Sigmoid colon (tissue), 7 donors: ENCODE measurements at regions of chr12 and their contacts with region 1.

Region 1: GRCh38 chr12:12562585-12563261 is at the start of gene DUSP16:
- DNase-seq: peak; percentile 94
- H3K4me3 ChIP-seq: peak within 1 kb of the TSS; percentile 88 to 96 (median 92)
- H3K27ac ChIP-seq: peak within 1 kb of the TSS; percentile 96 to 100 (median 100)
- H3K4me1 ChIP-seq: peaks cover 0 to 40% (median 25%) of the 10 kb centered on the region in 4 donors
- H3K27me3 ChIP-seq: no peaks in the 10 kb centered on the region
- CTCF ChIP-seq: no peak
- EP300 ChIP-seq: no peak
- POLR2A ChIP-seq: no peak
- total RNA-seq, gene DUSP16: 8.6 to 13.8 (median 11.2) TPM

Region 2: GRCh38 chr12:10721651-10722501 is 1840.8 kb before region 1 on chr12:
- intact Hi-C with region 1: loop called (anchors 5 kb)
- DNase-seq: peak; percentile 98
- H3K4me3 ChIP-seq: peak overlapping the region; percentile 65 to 99 (median 96)
- H3K27ac ChIP-seq: peak overlapping the region; percentile 96 to 99 (median 98)
- H3K4me1 ChIP-seq: peaks cover 0 to 55% (median 50%) of the 10 kb centered on the region in 4 donors
- H3K27me3 ChIP-seq: no peaks in the 10 kb centered on the region
- CTCF ChIP-seq: no peak
- EP300 ChIP-seq: peak; percentile 68 to 97 (median 86)
- POLR2A ChIP-seq: peak; percentile 24 to 26

Region 3: GRCh38 chr12:12356886-12357718 is 205.6 kb before region 1 on chr12 and contains the start of gene BORCS5:
- intact Hi-C with region 1: loop called (anchors 5 kb)
- DNase-seq: peak; percentile 98
- H3K4me3 ChIP-seq: peak within 1 kb of the TSS; percentile 82 to 99 (median 93)
- H3K27ac ChIP-seq: peak within 1 kb of the TSS; percentile 97 to 100 (median 98)
- H3K4me1 ChIP-seq: peaks cover 0 to 19% (median 11%) of the 10 kb centered on the region in 4 donors
- H3K27me3 ChIP-seq: no peaks in the 10 kb centered on the region
- CTCF ChIP-seq: peak in 1 of 4 experiments; percentile 8
- EP300 ChIP-seq: peak in 1 of 4 donors; percentile 62
- POLR2A ChIP-seq: peak; percentile 95 to 98
- total RNA-seq, gene BORCS5: 7.1 to 25.3 (median 14.0) TPM

Region 4: DNA sequence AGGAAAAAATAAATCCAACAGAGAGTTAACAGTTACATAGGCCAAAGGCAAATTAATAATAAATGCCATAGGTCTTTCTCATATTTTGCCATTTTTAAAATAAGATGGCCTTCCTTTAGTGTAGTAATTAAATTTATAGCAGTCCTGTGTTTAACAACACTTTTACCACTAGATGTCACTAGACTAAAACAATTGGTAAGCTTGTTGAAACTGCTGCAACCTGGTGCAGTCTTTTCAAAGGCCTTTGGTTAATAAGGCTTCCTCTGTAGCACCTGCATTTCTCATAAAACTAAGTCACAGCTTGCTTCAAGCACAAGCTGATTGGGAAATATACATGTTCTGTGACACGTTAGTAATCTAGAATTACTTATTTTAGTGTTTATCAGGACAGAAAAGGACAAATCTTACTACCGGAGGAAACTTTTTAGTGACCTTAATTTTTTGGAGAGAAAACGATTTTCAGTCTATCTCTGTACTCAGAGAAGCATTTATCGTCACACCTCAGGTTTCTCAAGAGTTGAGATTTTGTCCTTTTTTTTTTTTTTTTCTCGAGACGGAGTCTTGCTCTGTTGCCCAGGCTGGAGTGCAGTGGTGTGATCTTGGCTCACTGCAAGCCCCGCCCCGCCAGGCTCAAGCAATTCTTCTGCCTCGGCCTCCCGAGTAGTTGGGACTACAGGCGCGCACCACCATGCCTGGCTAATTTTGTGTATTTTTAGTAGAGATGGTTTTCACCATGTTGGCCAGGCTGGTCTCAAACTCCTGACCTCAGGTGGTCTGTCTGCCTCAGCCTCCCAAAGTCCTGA is 185.9 kb before region 1 on chr12:
- intact Hi-C with region 1: loop called (anchors 5 kb)
- DNase-seq: no peak
- H3K4me3 ChIP-seq: no peak overlapping the region
- H3K27ac ChIP-seq: no peak overlapping the region
- H3K4me1 ChIP-seq: no peaks in the 10 kb centered on the region
- H3K27me3 ChIP-seq: no peaks in the 10 kb centered on the region
- CTCF ChIP-seq: peak; percentile 60 to 84 (median 67)
- EP300 ChIP-seq: no peak
- POLR2A ChIP-seq: no peak

Region 5: GRCh38 chr12:12582895-12583303 is 20.2 kb after region 1 on chr12:
- intact Hi-C with region 1: no loop called
- DNase-seq: no peak
- H3K4me3 ChIP-seq: no peak overlapping the region
- H3K27ac ChIP-seq: no peak overlapping the region
- H3K4me1 ChIP-seq: no peaks in the 10 kb centered on the region
- H3K27me3 ChIP-seq: no peaks in the 10 kb centered on the region
- CTCF ChIP-seq: no peak
- EP300 ChIP-seq: no peak
- POLR2A ChIP-seq: no peak

Region 6: DNA sequence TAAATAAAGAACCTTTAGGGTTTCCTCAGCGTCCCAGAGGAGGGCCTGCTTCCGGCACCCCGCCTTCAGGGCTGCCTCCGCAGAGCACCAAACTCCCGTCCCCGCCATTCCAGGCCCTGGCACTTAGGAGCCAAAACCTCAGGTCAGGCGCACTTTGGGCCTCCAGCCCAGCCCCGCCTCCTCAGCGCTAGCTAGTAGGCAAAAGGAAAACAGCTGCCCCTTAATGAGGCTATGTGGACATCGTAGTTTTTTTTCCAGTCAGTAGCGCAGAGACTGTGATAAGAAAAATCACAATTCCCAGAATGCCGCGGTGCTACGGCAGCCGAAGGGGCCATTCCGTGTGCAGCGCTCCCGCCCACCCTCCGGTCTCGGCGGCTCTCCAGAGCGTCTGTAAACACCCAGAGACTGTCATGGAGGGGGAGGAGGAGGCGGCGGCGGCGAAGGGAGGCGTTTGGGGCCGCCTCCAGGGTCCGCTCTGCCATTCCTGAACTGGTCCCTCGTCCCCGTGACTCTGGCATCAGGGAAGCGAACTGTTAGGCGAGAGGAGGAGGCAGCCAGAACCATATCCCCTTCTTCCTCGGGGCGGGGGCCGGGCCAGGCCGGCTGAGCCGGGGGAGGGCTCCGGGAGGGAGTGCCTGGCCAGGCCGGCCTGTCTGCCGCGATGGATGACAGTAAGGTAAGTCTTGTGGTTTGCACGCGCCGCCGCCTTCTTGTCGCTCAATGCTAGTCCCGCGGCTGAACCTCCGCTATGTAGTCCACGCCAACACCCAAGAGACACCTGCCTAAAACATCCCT is 49.0 kb after region 1 on chr12 and contains the start of gene CREBL2:
- intact Hi-C with region 1: loop called (anchors 2 kb)
- DNase-seq: peak; percentile 97
- H3K4me3 ChIP-seq: peak within 1 kb of the TSS; percentile 54 to 85 (median 61)
- H3K27ac ChIP-seq: peak within 1 kb of the TSS; percentile 85 to 96 (median 90)
- H3K4me1 ChIP-seq: peaks cover 0 to 44% (median 36%) of the 10 kb centered on the region in 4 donors
- H3K27me3 ChIP-seq: no peaks in the 10 kb centered on the region
- CTCF ChIP-seq: no peak
- EP300 ChIP-seq: peak; percentile 27 to 85 (median 50)
- POLR2A ChIP-seq: peak; percentile 39 to 72
- total RNA-seq, gene CREBL2: 35.0 to 59.9 (median 46.5) TPM

Region 7: GRCh38 chr12:12696562-12697383 is 134.1 kb after region 1 on chr12:
- intact Hi-C with region 1: loop called (anchors 5 kb)
- DNase-seq: peak; percentile 94
- H3K4me3 ChIP-seq: peak overlapping the region; percentile 44 to 59 (median 54)
- H3K27ac ChIP-seq: peak overlapping the region; percentile 85 to 93 (median 88)
- H3K4me1 ChIP-seq: peaks cover 0 to 10% (median 0%) of the 10 kb centered on the region in 4 donors
- H3K27me3 ChIP-seq: no peaks in the 10 kb centered on the region
- CTCF ChIP-seq: no peak
- EP300 ChIP-seq: no peak
- POLR2A ChIP-seq: peak in 1 of 2 donors; percentile 77

Region 8: GRCh38 chr12:12716793-12717585 is 154.3 kb after region 1 on chr12 and contains the start of gene CDKN1B:
- intact Hi-C with region 1: loop called (anchors 5 kb)
- DNase-seq: peak; percentile 98
- H3K4me3 ChIP-seq: peak within 1 kb of the TSS; percentile 77 to 94 (median 88)
- H3K27ac ChIP-seq: peak within 1 kb of the TSS; percentile 98 to 100 (median 99)
- H3K4me1 ChIP-seq: peaks cover 0 to 62% (median 59%) of the 10 kb centered on the region in 4 donors
- H3K27me3 ChIP-seq: no peaks in the 10 kb centered on the region
- CTCF ChIP-seq: no peak
- EP300 ChIP-seq: peak in 1 of 4 donors; percentile 56
- POLR2A ChIP-seq: peak; percentile 89 to 90
- total RNA-seq, gene CDKN1B: 52.5 to 106 (median 81.3) TPM

Region 9: GRCh38 chr12:12985817-12986408 is 423.2 kb after region 1 on chr12:
- intact Hi-C with region 1: no loop called
- DNase-seq: no peak
- H3K4me3 ChIP-seq: no peak overlapping the region
- H3K27ac ChIP-seq: no peak overlapping the region
- H3K4me1 ChIP-seq: peaks cover 0 to 5% (median 2%) of the 10 kb centered on the region in 4 donors
- H3K27me3 ChIP-seq: no peaks in the 10 kb centered on the region
- CTCF ChIP-seq: peak in 2 of 4 experiments; percentile 10 to 17
- EP300 ChIP-seq: no peak
- POLR2A ChIP-seq: no peak